Naive thymus-derived CD4-positive, alpha-beta T cell (primary cell): ENCODE measurements at regions of chr10 and their contacts with region 1.

Region 1: DNA sequence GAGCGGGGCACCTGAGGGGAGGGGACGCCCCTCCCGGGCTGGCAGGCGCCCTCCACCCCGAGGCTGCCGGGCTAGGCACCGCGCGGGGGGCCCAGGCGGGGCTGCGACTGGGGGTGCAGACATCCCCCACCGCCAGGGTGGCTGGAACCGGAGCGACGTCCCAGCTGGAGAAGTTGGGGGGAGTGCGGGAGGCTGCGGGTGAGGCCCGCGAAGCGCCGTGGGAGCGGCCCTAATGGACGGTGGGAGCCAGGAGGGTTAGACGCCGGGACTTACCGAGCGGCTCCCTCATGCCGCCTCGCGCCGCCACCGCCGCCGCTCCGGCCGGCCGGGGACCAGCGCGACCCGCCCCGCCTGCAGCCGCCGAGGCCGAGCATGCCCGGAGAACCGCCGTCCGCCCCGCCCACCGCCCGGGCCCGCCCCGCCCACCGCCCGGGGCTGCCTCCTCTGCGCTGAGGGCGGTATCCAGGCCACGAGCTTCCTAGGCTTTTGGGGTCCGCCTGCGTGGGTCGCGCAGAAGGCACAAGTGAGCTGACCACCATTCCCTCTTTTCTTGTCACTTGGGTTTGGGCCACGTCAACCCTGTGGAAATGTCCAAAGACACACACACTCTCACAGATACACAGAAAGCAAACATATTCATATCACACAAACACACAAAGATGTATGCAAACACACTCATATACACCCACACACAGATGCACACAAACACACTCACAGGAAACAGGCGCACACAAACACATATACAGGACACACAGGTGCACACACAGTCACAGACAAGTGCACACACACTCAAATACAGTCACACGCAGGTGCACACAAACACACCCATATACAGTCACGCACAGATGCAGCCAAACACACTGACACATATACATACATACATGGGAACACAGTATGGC is at the start of gene JCAD:
- DNase-seq: peak in 6 of 9 donors; percentile 17 to 63 (median 36)
- ATAC-seq: peak; percentile 86
- H3K4me3 ChIP-seq: peak within 1 kb of the TSS; percentile 39
- H3K4me3 Mint-ChIP-seq: peak within 1 kb of the TSS; percentile 68 to 95 (median 78)
- H3K27ac ChIP-seq: no peak within 1 kb of the TSS
- H3K27ac Mint-ChIP-seq: no peak within 1 kb of the TSS
- H3K4me1 ChIP-seq: peaks cover 5 to 12% of the 10 kb centered on the region in 2 donors
- H3K4me1 Mint-ChIP-seq: peaks cover 5 to 11% (median 6%) of the 10 kb centered on the region in 7 donors
- H3K27me3 ChIP-seq: peaks cover 5 to 23% of the 10 kb centered on the region in 2 donors
- H3K27me3 Mint-ChIP-seq: peaks cover 67 to 90% (median 83%) of the 10 kb centered on the region in 5 donors
- total RNA-seq, gene JCAD: 0.44 to 0.56 TPM in 2 of 5 experiments, not detected in the others

Region 2: GRCh38 chr10:30048768-30049517 is 10.5 kb before region 1 on chr10:
- CTCF ChIA-PET with region 1: no interaction called
- POLR2A ChIA-PET with region 1: no interaction called
- intact Hi-C with region 1: loop called in 1 of 2 experiments (anchors 1 kb)
- DNase-seq: no peak
- ATAC-seq: peak; percentile 30
- H3K4me3 ChIP-seq: peak overlapping the region; percentile 19
- H3K4me3 Mint-ChIP-seq: peak overlapping the region; percentile 45 to 81 (median 74)
- H3K27ac ChIP-seq: no peak overlapping the region
- H3K27ac Mint-ChIP-seq: peak overlapping the region in 2 of 9 donors; percentile 6 to 44
- H3K4me1 ChIP-seq: peaks cover 0 to 17% of the 10 kb centered on the region in 2 donors
- H3K4me1 Mint-ChIP-seq: peaks cover 13 to 31% (median 23%) of the 10 kb centered on the region in 7 donors
- H3K27me3 ChIP-seq: peaks cover 0 to 13% of the 10 kb centered on the region in 2 donors
- H3K27me3 Mint-ChIP-seq: peaks cover 63 to 90% (median 83%) of the 10 kb centered on the region in 5 donors

Region 3: GRCh38 chr10:30476511-30477155 is 417.2 kb after region 1 on chr10:
- CTCF ChIA-PET with region 1: no interaction called
- POLR2A ChIA-PET with region 1: no interaction called
- intact Hi-C with region 1: no loop called
- DNase-seq: no peak
- ATAC-seq: no peak
- H3K4me3 ChIP-seq: no peak overlapping the region
- H3K4me3 Mint-ChIP-seq: no peak overlapping the region
- H3K27ac ChIP-seq: no peak overlapping the region
- H3K27ac Mint-ChIP-seq: peak overlapping the region in 1 of 9 donors; percentile 30
- H3K4me1 ChIP-seq: no peaks in the 10 kb centered on the region
- H3K4me1 Mint-ChIP-seq: peaks cover 4 to 16% (median 8%) of the 10 kb centered on the region in 7 donors
- H3K27me3 ChIP-seq: no peaks in the 10 kb centered on the region
- H3K27me3 Mint-ChIP-seq: peaks cover 0 to 21% (median 0%) of the 10 kb centered on the region in 5 donors